Adrenal gland (tissue), 19 donors: ENCODE measurements at regions of chr12 and their contacts with region 1.

Region 1: GRCh38 chr12:120175062-120175461 is 19.5 kb downstream of the GCN1 start:
- DNase-seq: no peak
- H3K4me3 ChIP-seq: no peak overlapping the region
- H3K27ac ChIP-seq: no peak overlapping the region
- H3K4me1 ChIP-seq: no peaks in the 10 kb centered on the region
- H3K27me3 ChIP-seq: no peaks in the 10 kb centered on the region
- CTCF ChIP-seq: no peak
- POLR2A ChIP-seq: no peak

Region 2: DNA sequence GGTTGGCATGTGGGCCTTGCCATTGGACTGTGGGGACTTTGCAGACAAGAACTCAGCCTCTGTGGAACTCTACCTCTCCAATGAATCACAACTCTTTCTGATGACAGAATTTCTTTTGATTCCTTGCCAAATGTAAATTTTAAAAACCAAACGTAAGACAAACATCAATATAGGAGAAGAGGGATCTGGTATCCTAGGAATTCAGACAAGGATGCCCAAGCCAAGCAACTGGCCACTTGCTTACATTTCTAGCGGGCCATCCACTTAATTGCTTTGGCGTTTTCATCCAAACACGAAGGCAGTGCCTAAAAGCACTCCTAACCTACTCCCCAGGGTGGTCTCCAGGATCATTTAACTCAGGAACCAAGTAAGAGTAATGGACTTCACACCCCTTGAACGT is 35.1 kb before region 1 on chr12:
- intact Hi-C with region 1: loop called in 1 of 2 experiments (anchors 5 kb)
- DNase-seq: no peak
- H3K4me3 ChIP-seq: no peak overlapping the region
- H3K27ac ChIP-seq: no peak overlapping the region
- H3K4me1 ChIP-seq: no peaks in the 10 kb centered on the region
- H3K27me3 ChIP-seq: no peaks in the 10 kb centered on the region
- CTCF ChIP-seq: no peak
- POLR2A ChIP-seq: no peak